A673 (cell line): ENCODE measurements at regions of chr19 and their contacts with region 1.

Region 1: DNA sequence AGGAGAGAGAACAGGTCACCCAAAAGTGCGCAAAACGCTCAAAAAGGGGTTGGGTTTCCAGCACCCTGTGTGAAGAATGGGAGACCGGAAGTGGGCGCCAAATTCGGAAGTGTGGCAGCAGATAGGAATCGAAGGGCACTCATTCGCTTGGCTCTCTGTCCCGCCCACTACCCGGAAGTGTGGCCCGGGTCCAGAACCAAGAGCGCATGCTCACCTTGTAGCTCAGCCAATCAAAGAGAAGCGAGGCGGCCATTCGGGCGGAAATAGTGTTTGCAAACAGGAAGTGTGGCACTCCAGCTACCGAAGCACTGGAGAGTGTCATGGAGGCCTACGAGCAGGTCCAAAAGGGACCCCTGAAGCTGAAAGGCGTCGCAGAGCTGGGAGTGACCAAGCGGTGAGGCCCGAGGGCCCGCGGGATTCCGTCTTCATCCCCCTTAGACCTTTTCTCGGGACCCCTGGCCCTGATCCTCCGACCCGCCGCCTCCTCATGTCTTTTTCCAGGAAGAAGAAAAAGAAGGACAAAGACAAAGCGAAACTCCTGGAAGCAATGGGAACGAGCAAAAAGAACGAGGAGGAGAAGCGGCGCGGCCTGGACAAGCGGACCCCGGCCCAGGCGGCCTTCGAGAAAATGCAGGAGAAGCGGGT is at the start of gene FAM32A:
- DNase-seq: peak; percentile 99
- H3K4me3 ChIP-seq: peak within 1 kb of the TSS; percentile 94
- H3K27ac ChIP-seq: peak within 1 kb of the TSS; percentile 87
- H3K4me1 ChIP-seq: peaks cover 4% of the 10 kb centered on the region
- H3K27me3 ChIP-seq: no peaks in the 10 kb centered on the region
- CTCF ChIP-seq: no peak
- total RNA-seq, gene FAM32A: 86.2 and 93.2 TPM in 2 replicates

Region 2: DNA sequence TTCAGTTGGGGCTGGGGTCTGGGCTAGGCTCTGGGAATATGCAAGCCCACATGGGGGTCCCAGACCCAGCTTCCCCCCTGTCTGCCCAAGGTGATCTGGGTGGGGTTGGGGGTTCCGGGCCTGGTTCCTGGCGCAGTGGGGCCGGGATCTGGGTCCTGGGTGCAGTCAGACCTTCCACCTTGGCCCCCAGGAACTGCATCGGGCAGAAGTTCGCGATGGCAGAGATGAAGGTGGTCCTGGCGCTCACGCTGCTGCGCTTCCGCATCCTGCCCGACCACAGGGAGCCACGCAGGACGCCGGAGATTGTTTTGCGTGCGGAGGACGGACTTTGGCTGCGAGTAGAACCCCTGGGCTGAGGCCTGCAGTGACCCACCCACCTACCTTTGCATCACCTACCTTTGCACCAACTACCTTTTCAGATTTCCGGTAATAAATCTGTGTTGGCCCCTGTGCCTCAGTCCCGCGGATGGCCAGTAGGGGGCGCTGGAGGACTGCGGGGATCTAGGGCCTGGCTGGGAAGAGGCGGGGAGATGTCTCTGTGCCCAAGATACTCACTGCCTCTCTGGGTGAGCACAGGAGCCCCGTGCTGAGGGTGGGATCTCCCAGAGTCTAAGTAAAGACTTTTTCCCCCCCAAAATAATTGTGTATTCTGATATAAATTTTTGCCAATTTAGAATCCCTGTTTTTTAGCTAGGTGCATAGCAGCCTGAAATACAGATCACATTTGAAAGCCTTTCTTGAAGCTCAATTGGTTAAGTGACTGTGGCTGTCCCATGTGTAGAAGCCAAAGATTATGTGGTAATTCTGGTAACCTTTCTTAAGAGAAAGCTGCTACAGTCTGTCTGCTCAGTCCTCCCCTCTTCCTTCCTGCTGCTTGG is 556.0 kb before region 1 on chr19:
- CTCF ChIA-PET with region 1: interaction called, 3 read pairs
- POLR2A ChIA-PET with region 1: no interaction called
- intact Hi-C with region 1: loop called (anchors 2 kb)
- DNase-seq: peak; percentile 74
- H3K4me3 ChIP-seq: no peak overlapping the region
- H3K27ac ChIP-seq: no peak overlapping the region
- H3K4me1 ChIP-seq: no peaks in the 10 kb centered on the region
- H3K27me3 ChIP-seq: no peaks in the 10 kb centered on the region
- CTCF ChIP-seq: peak; percentile 95

Region 3: GRCh38 chr19:16025108-16026101 is 159.8 kb before region 1 on chr19:
- CTCF ChIA-PET with region 1: no interaction called
- POLR2A ChIA-PET with region 1: no interaction called
- intact Hi-C with region 1: no loop called
- DNase-seq: no peak
- H3K4me3 ChIP-seq: no peak overlapping the region
- H3K27ac ChIP-seq: no peak overlapping the region
- H3K4me1 ChIP-seq: no peaks in the 10 kb centered on the region
- H3K27me3 ChIP-seq: peaks cover 9% of the 10 kb centered on the region
- CTCF ChIP-seq: no peak

Region 4: DNA sequence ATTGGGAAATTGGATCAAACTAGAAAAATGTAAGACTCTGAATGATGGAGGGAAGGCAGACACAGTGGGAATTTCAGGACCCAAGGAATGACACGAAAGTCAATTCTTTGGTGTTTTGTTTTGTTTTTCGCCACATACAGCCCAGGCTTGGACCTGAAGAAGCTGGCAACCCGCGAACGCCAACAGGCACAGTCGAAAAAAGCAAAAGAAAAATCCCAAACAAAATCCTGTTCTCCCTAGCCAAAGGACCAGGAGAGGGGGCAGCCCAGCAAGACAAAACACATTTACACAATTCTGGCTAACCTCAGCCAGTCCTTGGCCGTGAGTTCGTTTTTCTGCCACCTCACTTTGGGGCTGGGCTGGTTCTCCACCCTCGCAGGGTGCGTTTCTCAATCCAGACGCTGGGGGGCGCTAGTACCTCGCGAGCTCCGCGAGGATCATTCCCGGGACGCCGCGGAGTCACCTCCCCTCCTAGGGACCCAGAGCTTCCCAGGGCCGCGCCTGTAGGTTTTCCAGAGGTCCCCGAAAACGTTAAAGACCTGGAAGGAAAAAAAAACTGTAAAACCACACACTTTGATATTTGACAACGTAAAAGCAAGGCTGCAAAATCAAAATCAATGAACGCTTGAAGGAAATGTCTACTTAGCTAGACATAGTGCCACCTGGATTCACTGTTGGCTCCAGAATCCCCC is 143.8 kb before region 1 on chr19:
- CTCF ChIA-PET with region 1: interaction called, 25 read pairs
- POLR2A ChIA-PET with region 1: no interaction called
- intact Hi-C with region 1: loop called (anchors 1 kb)
- DNase-seq: peak; percentile 83
- H3K4me3 ChIP-seq: peak overlapping the region; percentile 29
- H3K27ac ChIP-seq: no peak overlapping the region
- H3K4me1 ChIP-seq: no peaks in the 10 kb centered on the region
- H3K27me3 ChIP-seq: no peaks in the 10 kb centered on the region
- CTCF ChIP-seq: peak; percentile 98

Region 5: DNA sequence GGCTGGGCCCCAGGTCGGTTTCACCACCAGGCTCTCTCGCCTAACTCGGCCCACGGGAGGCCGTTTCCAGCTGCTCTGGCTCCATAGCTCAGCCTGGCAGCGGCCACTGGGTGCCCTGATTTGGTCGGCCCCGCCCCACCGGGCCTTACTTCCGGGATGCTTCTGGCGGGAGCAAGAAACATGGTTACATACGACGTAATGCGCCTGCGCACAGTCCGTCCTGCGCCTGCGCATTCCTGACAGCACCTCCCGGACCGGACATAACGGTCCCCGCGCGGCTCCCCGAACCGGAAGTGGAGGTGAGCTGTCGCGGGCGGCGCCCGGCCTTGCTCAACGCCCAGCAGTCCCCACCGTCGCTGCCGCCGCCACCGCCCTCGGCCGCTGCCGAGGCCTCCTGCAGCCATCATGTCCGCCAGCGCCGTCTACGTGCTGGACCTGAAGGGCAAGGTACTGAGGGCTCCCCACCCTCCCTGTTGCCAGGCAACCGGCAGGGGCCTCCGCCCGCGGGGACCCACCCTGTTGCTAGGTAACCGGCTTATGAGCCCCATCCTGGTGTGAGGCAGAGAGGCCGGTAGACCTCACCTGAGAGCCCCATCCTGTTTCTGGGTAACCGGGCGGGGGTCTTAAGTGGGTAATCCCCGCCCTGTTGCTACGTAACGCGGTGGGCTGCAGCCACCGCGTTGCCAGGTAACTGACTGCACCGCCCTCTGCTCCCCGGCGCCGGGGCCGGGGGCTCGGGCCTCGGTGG is 12.6 kb after region 1 on chr19 and contains the start of gene AP1M1:
- CTCF ChIA-PET with region 1: interaction called, 6 read pairs
- POLR2A ChIA-PET with region 1: interaction called, 14 read pairs
- intact Hi-C with region 1: no loop called
- DNase-seq: peak; percentile 98
- H3K4me3 ChIP-seq: peak within 1 kb of the TSS; percentile 92
- H3K27ac ChIP-seq: peak within 1 kb of the TSS; percentile 56
- H3K4me1 ChIP-seq: peaks cover 11% of the 10 kb centered on the region
- H3K27me3 ChIP-seq: no peaks in the 10 kb centered on the region
- CTCF ChIP-seq: no peak
- total RNA-seq, gene AP1M1: 105 and 116 TPM in 2 replicates

Region 6: GRCh38 chr19:16229322-16229641 is 44.0 kb after region 1 on chr19:
- CTCF ChIA-PET with region 1: no interaction called
- POLR2A ChIA-PET with region 1: interaction called, 13 read pairs
- intact Hi-C with region 1: no loop called
- DNase-seq: no peak
- H3K4me3 ChIP-seq: no peak overlapping the region
- H3K27ac ChIP-seq: no peak overlapping the region
- H3K4me1 ChIP-seq: no peaks in the 10 kb centered on the region
- H3K27me3 ChIP-seq: no peaks in the 10 kb centered on the region
- CTCF ChIP-seq: no peak